Activated CD8-positive, alpha-beta T cell treated with anti-CD3 and anti-CD28 coated beads, Interleukin-2, amount 10 ng/mL, durations not matched to agents 7 days and 5 days (primary cell): ENCODE measurements at regions of chr18 and their contacts with region 1.

Region 1: GRCh38 chr18:3585656-3586509 is 135.9 kb downstream of the TGIF1 start:
- DNase-seq: peak; percentile 80
- ATAC-seq: peak; percentile 95
- H3K4me3 Mint-ChIP-seq: no peak overlapping the region
- H3K27ac Mint-ChIP-seq: no peak overlapping the region
- H3K4me1 Mint-ChIP-seq: peaks cover 28% of the 10 kb centered on the region
- H3K27me3 Mint-ChIP-seq: no peaks in the 10 kb centered on the region

Region 2: DNA sequence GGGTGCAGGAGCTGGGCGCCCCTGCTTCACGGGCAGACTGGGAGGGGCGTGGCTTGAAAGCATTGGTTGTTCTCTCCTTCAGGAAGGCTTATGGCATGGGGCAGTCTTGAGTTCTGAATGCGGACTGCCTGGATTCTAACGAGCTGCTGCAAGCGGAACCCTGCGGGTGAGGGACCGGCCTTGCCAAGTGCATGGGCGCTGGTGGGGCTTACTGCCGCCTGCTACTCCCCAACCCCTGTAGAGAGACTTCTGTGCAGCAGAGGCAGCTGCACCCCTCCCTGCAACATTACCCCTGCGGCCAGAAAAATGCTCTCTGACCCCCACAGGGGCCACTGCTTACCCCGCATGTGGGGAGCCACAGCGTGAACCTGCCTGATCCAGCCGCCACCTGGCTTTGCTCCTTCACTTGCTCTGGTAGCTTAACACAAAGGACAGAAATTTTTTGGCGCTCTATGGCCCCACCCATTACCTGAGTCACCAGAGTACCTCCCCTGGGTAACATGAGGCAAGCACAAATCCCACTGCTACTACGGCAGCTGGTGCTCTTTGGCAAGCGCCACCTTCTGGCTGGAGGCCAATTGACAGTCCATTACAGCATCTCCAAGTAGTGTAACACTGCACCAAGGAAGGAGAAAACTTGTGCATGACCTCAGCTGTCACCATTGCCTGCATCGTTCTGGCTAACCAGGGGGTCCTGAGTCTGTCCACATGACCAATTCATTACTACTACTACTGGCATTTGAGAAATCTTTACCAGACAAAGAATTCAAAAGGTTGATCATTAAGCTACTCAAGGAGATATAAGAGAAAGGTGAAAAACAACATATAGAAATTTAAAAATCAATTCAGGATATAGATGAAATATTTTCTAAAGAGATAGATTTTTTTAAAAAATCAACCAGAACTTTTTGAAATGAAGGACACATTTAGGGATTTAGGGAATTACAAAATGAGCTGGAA is 288.6 kb before region 1 on chr18:
- CTCF ChIA-PET with region 1: interaction called, 14 read pairs
- POLR2A ChIA-PET with region 1: interaction called, 4 read pairs
- DNase-seq: peak; percentile 97
- ATAC-seq: peak; percentile 98
- H3K4me3 Mint-ChIP-seq: peak overlapping the region; percentile 89
- H3K27ac Mint-ChIP-seq: peak overlapping the region; percentile 81
- H3K4me1 Mint-ChIP-seq: peaks cover 7% of the 10 kb centered on the region
- H3K27me3 Mint-ChIP-seq: peaks cover 28% of the 10 kb centered on the region

Region 3: DNA sequence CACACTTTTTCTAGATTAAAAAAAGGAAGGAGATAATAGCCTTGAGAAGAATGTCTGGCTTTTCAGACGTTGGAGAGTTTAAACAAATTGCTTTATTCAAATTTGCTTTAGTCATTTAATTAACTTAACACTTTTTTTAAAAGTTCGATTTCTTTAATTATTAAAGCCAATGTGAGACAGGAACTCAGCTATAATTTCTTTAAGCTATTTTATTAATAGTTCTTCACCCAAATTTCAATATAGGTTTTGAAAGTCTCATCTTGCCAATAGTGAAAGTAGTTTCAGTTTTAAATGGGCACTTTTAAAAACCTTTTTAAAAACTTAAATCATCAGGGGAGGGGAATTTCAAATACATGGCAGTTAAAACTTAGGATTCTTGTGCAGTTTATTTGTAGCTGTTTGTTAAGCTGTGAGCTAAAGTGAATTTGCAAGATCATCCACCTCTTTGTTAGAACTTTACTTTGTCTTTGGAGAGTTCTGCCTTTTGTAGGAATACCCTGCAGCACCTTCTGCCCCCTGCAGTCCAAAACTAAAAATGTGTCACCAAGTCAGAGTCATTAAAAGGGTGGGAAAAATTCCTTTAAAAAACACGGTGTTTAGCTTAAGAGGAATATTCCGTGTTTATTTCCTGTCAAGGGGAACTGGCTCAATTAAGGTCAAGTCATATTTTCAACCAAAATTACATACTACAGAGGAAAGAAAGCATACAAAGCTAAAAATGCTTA is 131.4 kb before region 1 on chr18:
- CTCF ChIA-PET with region 1: interaction called, 54 read pairs
- POLR2A ChIA-PET with region 1: no interaction called
- DNase-seq: peak; percentile 62
- ATAC-seq: no peak
- H3K4me3 Mint-ChIP-seq: peak overlapping the region; percentile 88
- H3K27ac Mint-ChIP-seq: peak overlapping the region; percentile 90
- H3K4me1 Mint-ChIP-seq: peaks cover 53% of the 10 kb centered on the region
- H3K27me3 Mint-ChIP-seq: no peaks in the 10 kb centered on the region

Region 4: DNA sequence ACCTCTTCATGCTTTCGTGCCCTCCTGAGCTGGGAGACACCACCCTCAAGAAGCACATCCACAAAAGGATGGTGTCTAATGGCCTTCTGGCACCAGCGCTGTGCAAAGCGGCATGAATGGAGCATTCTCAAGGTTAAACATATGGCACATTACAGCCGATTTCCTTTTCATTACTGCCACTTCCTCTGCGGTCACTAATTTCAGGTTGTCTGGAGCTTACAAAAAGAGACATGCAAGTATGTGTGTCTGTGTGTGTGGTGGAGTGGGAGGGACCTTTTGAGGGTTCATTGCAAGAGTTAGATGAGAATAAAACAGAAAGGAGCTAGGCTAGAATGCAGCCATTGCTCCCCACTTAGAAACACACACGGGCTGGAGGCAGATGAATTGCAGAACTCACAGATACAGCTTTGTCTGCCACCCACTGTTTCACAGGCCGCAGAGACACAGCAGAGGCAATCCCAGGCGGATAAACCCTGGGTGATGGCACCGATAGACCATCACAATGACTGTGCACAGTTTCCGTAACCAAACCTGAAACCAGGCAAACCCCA is 59.9 kb before region 1 on chr18:
- CTCF ChIA-PET with region 1: interaction called, 14 read pairs
- POLR2A ChIA-PET with region 1: no interaction called
- DNase-seq: peak; percentile 73
- ATAC-seq: peak; percentile 80
- H3K4me3 Mint-ChIP-seq: peak overlapping the region; percentile 55
- H3K27ac Mint-ChIP-seq: peak overlapping the region; percentile 58
- H3K4me1 Mint-ChIP-seq: peaks cover 17% of the 10 kb centered on the region
- H3K27me3 Mint-ChIP-seq: peaks cover 4% of the 10 kb centered on the region

Region 5: DNA sequence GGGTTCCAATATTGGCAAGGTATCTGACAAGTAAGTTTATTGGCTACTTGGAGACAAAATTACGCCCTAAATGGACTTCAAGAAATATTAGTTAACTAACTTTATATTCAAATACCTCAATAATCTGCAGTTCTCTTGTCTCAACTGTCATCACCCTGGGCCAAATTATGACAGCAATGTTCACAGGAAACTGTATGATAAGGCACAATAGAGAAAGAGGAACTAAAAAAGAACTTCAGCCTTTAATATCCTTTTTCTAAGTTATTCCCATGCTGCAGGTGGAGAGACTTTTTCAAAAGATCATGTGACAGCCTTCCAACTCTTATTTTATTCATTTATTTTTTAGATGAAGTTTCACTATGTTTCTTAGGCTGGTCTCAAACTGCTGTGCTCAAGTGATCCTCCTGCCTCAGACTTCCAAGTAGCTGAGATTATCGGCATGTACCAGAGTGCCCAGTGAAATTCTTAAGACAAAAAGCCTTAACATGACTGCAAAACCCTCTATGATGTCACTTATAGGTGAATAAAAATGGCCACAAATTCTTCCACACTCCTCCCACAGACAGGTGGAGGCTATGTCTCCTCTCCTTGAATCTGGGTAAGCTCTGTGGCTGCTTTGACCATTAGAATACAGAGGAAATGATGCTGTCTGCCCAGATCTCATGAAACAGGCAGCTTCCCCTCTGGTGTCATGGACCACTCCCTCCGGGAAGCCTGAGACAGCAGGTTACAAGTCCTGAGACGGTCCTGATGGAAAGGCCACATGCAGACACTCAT is 75.0 kb after region 1 on chr18:
- CTCF ChIA-PET with region 1: interaction called, 59 read pairs
- POLR2A ChIA-PET with region 1: interaction called, 3 read pairs
- DNase-seq: no peak
- ATAC-seq: no peak
- H3K4me3 Mint-ChIP-seq: no peak overlapping the region
- H3K27ac Mint-ChIP-seq: no peak overlapping the region
- H3K4me1 Mint-ChIP-seq: peaks cover 34% of the 10 kb centered on the region
- H3K27me3 Mint-ChIP-seq: no peaks in the 10 kb centered on the region